ENCODE measurements at regions of chr6 and their contacts with region 1.

Region 1: DNA sequence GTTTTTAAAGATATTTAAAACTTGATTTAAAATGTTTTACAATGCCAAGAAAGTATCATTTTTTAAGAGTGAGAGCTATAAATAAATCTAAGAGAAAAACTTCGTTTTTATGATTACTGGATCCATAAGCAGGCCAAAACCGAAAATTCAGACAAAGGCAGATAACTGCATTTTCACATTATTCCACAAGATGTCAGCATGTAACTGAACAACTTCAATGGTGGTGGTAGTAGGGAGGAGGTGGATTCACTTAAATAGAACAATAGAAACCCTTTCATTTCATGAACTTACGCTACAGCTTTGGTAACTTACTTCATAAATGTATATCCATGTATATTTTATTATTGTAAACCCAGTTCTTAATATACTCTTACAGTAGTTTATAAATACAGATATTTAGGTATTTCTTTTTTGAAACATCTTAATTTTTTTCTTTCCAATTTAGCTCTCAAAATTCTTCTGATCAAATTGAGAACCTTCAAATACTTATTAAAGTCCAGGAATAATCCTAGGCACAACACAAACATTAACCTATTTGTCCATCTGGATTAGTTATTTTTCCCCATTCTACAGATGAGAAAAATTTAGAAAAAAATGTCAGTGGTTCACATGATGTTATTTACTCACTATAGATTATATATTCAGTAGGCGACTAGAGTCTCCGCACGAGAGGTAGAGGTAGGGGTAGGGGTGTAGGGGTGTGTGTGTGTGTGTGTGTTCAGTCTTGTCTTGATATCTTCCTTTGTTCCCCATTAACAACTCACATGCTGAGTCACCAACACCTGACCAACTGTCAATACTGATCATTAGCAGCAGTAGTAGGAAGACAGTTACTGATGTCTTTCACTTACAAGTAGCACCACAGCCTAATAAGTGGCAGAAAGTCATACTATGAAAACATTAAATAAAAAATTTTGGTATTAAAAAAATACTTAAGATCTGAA is 111.5 kb downstream of the ARHGAP18 start:
- DNase-seq: peak; percentile 76
- ATAC-seq: peak; percentile 88
- H3K4me3 ChIP-seq: no peak overlapping the region
- H3K27ac ChIP-seq: peak overlapping the region; percentile 16
- H3K4me1 ChIP-seq: peaks cover 11% of the 10 kb centered on the region
- H3K27me3 ChIP-seq: no peaks in the 10 kb centered on the region
- CTCF ChIP-seq: peak; percentile 59 to 90 (median 78)
- EP300 ChIP-seq: no peak
- POLR2A ChIP-seq: no peak
- RAD21 ChIP-seq: peak; percentile 99

Region 2: DNA sequence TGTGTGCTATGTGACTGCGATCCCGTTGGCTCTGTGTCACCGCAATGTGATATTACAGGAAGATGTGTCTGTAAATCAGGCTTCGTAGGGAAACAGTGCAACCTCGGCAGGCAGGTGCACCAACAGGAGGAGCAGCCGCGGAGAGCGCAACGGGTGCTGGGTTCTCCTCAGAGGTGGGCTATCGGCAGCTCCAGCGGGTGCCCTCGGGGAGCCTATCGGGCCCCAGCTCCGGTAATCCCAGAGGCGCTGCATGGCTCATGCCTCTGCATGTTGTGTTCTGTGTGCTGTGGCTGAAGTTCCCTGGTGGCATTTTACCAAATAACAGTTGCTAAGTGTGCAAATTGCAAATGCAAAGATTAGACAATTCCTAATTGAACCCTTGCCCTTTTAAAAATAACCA is 305.7 kb before region 1 on chr6:
- CTCF ChIA-PET with region 1: no interaction called
- POLR2A ChIA-PET with region 1: no interaction called
- RAD21 ChIA-PET with region 1: no interaction called
- SMC1A ChIA-PET with region 1: no interaction called
- in situ Hi-C with region 1: no loop called
- intact Hi-C with region 1: no loop called
- DNase-seq: no peak
- ATAC-seq: no peak
- H3K4me3 ChIP-seq: no peak overlapping the region
- H3K27ac ChIP-seq: no peak overlapping the region
- H3K4me1 ChIP-seq: no peaks in the 10 kb centered on the region
- H3K27me3 ChIP-seq: no peaks in the 10 kb centered on the region
- CTCF ChIP-seq: no peak
- EP300 ChIP-seq: no peak
- POLR2A ChIP-seq: no peak
- RAD21 ChIP-seq: no peak

Region 3: DNA sequence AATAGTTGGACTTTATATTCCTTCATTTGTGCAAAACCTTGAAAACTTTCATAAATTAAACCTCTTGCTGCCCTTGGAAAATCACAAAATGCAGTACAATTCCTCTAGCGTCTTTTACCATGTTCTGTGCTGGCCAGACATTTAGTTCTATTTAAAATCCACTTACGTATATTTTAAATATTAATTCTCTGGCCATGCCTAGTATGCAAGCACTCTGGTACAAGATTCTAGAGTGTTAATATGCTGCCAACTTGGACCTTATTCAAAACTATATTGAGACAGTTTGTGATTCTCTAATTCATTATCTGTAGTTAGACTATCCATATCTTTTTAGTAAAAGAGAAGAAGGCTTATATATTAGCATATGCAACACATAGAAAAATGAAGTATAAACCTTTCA is 216.6 kb before region 1 on chr6:
- CTCF ChIA-PET with region 1: no interaction called
- POLR2A ChIA-PET with region 1: no interaction called
- RAD21 ChIA-PET with region 1: no interaction called
- SMC1A ChIA-PET with region 1: no interaction called
- in situ Hi-C with region 1: no loop called
- intact Hi-C with region 1: no loop called
- DNase-seq: no peak
- ATAC-seq: no peak
- H3K4me3 ChIP-seq: no peak overlapping the region
- H3K27ac ChIP-seq: no peak overlapping the region
- H3K4me1 ChIP-seq: no peaks in the 10 kb centered on the region
- H3K27me3 ChIP-seq: no peaks in the 10 kb centered on the region
- CTCF ChIP-seq: no peak
- EP300 ChIP-seq: no peak
- POLR2A ChIP-seq: no peak
- RAD21 ChIP-seq: no peak

Region 4: GRCh38 chr6:129583866-129584265 is 14.7 kb before region 1 on chr6:
- CTCF ChIA-PET with region 1: interaction called, 21 read pairs
- POLR2A ChIA-PET with region 1: no interaction called
- RAD21 ChIA-PET with region 1: interaction called, 3 read pairs
- SMC1A ChIA-PET with region 1: interaction called, 11 read pairs
- in situ Hi-C with region 1: no loop called
- intact Hi-C with region 1: no loop called
- DNase-seq: no peak
- ATAC-seq: no peak
- H3K4me3 ChIP-seq: no peak overlapping the region
- H3K27ac ChIP-seq: no peak overlapping the region
- H3K4me1 ChIP-seq: no peaks in the 10 kb centered on the region
- H3K27me3 ChIP-seq: no peaks in the 10 kb centered on the region
- CTCF ChIP-seq: no peak
- EP300 ChIP-seq: no peak
- POLR2A ChIP-seq: no peak
- RAD21 ChIP-seq: no peak

Region 5: DNA sequence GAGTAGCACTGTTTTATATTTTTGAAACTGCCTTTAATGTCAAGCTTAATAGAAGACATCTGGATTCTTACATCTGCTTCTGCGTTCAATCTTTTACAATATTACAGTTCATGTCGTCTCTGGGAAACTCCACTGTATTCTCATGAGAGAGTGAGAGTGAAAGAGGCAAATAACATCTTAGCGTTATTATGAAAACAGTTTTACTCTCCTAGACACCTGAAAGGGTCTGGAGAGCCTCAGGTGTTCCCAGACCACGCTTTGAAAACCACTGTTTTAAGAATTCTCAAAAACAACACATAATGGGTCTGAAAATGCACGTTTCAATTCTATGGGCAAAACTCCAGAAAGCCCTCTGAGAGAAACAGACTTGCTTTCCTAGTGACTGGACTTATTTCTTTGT is 48.1 kb after region 1 on chr6:
- CTCF ChIA-PET with region 1: interaction called, 5 read pairs
- POLR2A ChIA-PET with region 1: no interaction called
- RAD21 ChIA-PET with region 1: interaction called, 8 read pairs
- SMC1A ChIA-PET with region 1: interaction called, 10 read pairs
- in situ Hi-C with region 1: no loop called
- intact Hi-C with region 1: no loop called
- DNase-seq: peak; percentile 61
- ATAC-seq: peak; percentile 84
- H3K4me3 ChIP-seq: no peak overlapping the region
- H3K27ac ChIP-seq: peak overlapping the region; percentile 65
- H3K4me1 ChIP-seq: peaks cover 42% of the 10 kb centered on the region
- H3K27me3 ChIP-seq: no peaks in the 10 kb centered on the region
- CTCF ChIP-seq: no peak
- EP300 ChIP-seq: peak in 1 of 2 experiments; percentile 77; a peak in 2 of 4 replicates
- POLR2A ChIP-seq: no peak
- RAD21 ChIP-seq: no peak

Region 6: DNA sequence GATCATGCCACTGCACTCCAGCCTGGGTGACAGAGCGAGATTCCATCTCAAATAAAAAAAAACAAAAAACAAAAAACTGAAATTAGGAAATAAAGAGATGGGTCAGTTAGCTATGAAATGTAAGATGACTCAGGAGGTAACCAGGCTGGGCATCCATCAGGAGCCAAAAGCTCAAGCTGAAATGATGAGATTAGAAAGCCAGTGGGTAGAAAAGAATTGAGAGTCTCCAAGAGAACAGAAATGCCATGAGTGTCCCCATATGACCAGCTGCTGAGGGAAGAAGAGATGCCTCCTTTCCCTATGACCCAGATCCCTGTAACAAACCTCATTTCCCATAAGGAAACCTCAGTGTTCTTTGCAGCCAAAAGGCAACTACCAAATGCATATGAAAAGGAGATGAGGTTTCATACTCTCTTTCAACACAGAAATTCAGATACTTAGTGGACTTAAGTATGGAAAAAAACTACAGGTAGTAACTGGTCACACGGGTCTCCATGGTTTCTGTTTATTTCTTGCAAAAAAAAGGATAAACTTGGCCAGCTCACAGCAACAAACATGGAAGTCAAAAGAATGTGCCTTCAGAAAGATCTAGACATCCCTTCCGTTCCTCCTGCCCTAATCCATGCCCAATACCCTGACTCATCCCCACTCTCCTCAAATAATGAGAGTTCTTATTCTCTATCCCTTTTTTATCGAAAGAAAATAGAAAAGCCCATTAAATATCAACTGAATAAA is 103.4 kb after region 1 on chr6:
- CTCF ChIA-PET with region 1: interaction called, 33 read pairs
- POLR2A ChIA-PET with region 1: interaction called, 5 read pairs
- RAD21 ChIA-PET with region 1: interaction called, 50 read pairs
- SMC1A ChIA-PET with region 1: interaction called, 20 read pairs
- in situ Hi-C with region 1: no loop called
- intact Hi-C with region 1: no loop called
- DNase-seq: no peak
- ATAC-seq: no peak
- H3K4me3 ChIP-seq: peak overlapping the region; percentile 30; the same call in 1 of the 2 replicates
- H3K27ac ChIP-seq: peak overlapping the region; percentile 14; the same call in 1 of the 2 replicates
- H3K4me1 ChIP-seq: peaks cover 37% of the 10 kb centered on the region
- H3K27me3 ChIP-seq: no peaks in the 10 kb centered on the region
- CTCF ChIP-seq: no peak
- EP300 ChIP-seq: no peak
- POLR2A ChIP-seq: no peak
- RAD21 ChIP-seq: no peak

Region 7: GRCh38 chr6:129740013-129740412 is 141.5 kb after region 1 on chr6:
- CTCF ChIA-PET with region 1: interaction called, 55 read pairs
- POLR2A ChIA-PET with region 1: interaction called, 3 read pairs
- RAD21 ChIA-PET with region 1: interaction called, 23 read pairs
- SMC1A ChIA-PET with region 1: interaction called, 32 read pairs
- in situ Hi-C with region 1: loop called (anchors 5 kb)
- intact Hi-C with region 1: no loop called
- DNase-seq: no peak
- ATAC-seq: no peak
- H3K4me3 ChIP-seq: no peak overlapping the region
- H3K27ac ChIP-seq: no peak overlapping the region
- H3K4me1 ChIP-seq: peaks cover 6% of the 10 kb centered on the region; the same call in 1 of the 2 replicates
- H3K27me3 ChIP-seq: no peaks in the 10 kb centered on the region
- CTCF ChIP-seq: no peak
- EP300 ChIP-seq: no peak
- POLR2A ChIP-seq: no peak
- RAD21 ChIP-seq: no peak

Region 8: DNA sequence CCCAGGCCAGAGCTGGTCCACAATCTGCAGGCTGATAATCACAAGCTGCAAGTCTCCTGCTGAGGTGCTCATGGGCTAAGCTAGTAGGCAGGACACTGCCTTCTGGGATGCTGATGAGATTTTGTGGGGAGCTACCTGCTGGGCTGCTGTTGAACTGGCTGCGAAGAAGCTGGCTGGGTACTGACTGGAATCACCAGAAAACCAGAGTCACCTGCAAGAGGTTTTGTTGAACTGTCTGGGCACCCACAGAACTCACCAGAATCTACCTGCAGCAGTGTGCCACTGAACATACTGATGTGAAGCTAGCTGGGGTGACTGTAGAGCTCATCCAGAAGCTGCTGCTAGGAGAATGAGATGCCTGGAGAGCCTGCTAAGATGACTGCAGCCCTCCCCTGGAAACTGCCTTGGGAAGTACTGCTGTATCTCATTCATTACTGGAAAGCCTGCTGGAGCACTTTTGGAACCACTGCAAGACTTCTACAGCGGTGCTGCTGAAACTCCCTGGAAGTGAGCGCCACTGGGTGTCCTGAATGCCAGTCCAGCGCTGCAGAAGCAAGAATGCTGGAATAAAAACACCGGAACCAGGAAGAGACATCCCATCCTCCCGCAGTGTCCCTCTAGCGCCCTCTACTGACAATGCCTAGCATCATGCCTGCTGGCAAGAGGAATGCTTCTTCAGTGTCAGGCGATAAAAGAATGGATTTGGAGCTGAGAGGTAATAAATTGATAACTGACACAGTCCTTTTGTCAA is 176.4 kb after region 1 on chr6:
- CTCF ChIA-PET with region 1: interaction called, 48 read pairs
- POLR2A ChIA-PET with region 1: no interaction called
- RAD21 ChIA-PET with region 1: interaction called, 20 read pairs
- SMC1A ChIA-PET with region 1: interaction called, 32 read pairs
- in situ Hi-C with region 1: no loop called
- intact Hi-C with region 1: no loop called
- DNase-seq: no peak
- ATAC-seq: peak; percentile 72
- H3K4me3 ChIP-seq: no peak overlapping the region
- H3K27ac ChIP-seq: no peak overlapping the region
- H3K4me1 ChIP-seq: no peaks in the 10 kb centered on the region
- H3K27me3 ChIP-seq: no peaks in the 10 kb centered on the region
- CTCF ChIP-seq: peak; percentile 70 to 88 (median 80)
- EP300 ChIP-seq: no peak
- POLR2A ChIP-seq: no peak
- RAD21 ChIP-seq: peak; percentile 63

Region 9: DNA sequence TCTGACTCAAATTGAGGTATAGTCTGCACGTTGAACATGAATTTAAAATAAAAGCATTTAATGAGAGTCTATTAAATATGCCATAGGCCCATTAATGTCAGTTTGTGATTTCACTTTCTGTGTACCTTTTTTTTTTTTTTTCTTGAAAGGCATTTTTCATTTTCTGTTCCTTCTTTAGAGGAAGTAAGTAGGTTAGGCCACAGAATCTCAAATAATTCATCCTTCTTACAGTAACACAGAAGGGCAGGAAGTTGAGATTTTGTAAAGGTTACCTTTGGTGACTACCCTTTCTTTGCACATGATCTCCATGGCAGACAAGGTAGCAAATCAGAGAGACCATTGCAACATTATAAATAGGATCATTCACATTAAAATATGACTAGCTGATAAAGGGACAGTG is 429.4 kb after region 1 on chr6:
- CTCF ChIA-PET with region 1: interaction called, 14 read pairs
- POLR2A ChIA-PET with region 1: no interaction called
- RAD21 ChIA-PET with region 1: no interaction called
- SMC1A ChIA-PET with region 1: interaction called, 3 read pairs
- in situ Hi-C with region 1: loop called (anchors 5 kb)
- intact Hi-C with region 1: no loop called
- DNase-seq: no peak
- ATAC-seq: peak; percentile 89
- H3K4me3 ChIP-seq: no peak overlapping the region
- H3K27ac ChIP-seq: no peak overlapping the region
- H3K4me1 ChIP-seq: peaks cover 14% of the 10 kb centered on the region; the same call in 1 of the 2 replicates
- H3K27me3 ChIP-seq: no peaks in the 10 kb centered on the region
- CTCF ChIP-seq: no peak
- EP300 ChIP-seq: no peak
- POLR2A ChIP-seq: no peak
- RAD21 ChIP-seq: no peak

Measured in GM12878 (cell line).